Tibial artery (tissue), 4 donors: ENCODE measurements at regions of chr13 and their contacts with region 1.

Region 1: GRCh38 chr13:44160591-44161191 is 212.9 kb upstream of the SERP2 start:
- DNase-seq: peak in 1 of 2 donors; percentile 81
- H3K4me3 ChIP-seq: no peak overlapping the region
- H3K27ac ChIP-seq: peak overlapping the region; percentile 90 to 91
- H3K4me1 ChIP-seq: peaks cover 4 to 61% (median 59%) of the 10 kb centered on the region in 4 donors
- H3K27me3 ChIP-seq: no peaks in the 10 kb centered on the region
- CTCF ChIP-seq: no peak

Region 2: DNA sequence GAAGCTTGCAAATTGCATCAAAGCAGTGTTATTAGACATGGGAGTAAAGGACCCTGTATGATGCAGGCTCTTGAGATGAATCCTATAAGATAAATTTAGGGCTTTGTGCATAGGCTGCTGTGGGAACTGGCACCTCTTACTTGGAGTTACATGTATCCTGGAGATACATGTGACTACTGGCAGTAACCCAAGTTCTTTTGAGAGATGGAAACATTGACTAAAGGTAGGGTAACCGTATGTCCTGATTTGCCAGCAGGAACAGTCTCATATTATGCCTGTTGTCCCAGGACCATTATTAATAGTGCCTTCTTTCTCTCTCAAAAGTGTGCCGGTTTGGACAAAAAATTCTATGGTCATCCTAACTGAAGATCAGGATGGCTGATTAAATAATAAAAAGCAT is 85.6 kb before region 1 on chr13:
- intact Hi-C with region 1: no loop called
- DNase-seq: no peak
- H3K4me3 ChIP-seq: no peak overlapping the region
- H3K27ac ChIP-seq: no peak overlapping the region
- H3K4me1 ChIP-seq: peaks cover 0 to 4% (median 0%) of the 10 kb centered on the region in 4 donors
- H3K27me3 ChIP-seq: no peaks in the 10 kb centered on the region
- CTCF ChIP-seq: no peak

Region 3: DNA sequence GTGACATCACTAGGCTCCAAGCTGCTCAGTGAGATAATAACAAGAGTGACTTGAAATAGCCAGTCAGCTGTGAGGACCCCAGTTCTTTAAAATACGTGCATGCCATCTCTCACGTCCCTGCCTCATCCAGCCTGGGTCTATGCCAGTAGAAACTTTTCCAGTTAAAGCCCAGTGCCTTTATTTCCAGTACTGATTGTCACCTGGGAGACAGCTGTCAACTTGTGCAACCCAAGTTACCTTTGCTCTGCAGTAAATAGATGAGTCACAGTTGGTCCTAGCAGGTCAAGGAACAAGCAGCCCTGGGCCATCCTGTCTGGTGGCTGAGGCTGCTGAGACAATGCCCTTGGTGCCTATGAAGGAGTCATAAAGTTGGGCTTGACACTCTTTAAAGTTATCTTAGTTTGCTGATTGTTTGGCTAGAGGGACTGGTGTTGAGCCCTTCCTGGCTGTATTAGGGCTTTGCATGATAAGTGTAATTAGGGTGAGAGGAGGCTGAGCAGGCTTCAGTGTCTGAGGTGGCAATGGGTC is 52.3 kb before region 1 on chr13:
- intact Hi-C with region 1: no loop called
- DNase-seq: peak in 1 of 2 donors; percentile 31
- H3K4me3 ChIP-seq: no peak overlapping the region
- H3K27ac ChIP-seq: peak overlapping the region in 1 of 2 donors; percentile 3
- H3K4me1 ChIP-seq: peaks cover 0 to 61% (median 47%) of the 10 kb centered on the region in 4 donors
- H3K27me3 ChIP-seq: no peaks in the 10 kb centered on the region
- CTCF ChIP-seq: no peak

Region 4: GRCh38 chr13:44197791-44198770 is 37.4 kb after region 1 on chr13:
- intact Hi-C with region 1: no loop called
- DNase-seq: no peak
- H3K4me3 ChIP-seq: no peak overlapping the region
- H3K27ac ChIP-seq: no peak overlapping the region
- H3K4me1 ChIP-seq: peaks cover 0 to 19% (median 5%) of the 10 kb centered on the region in 4 donors
- H3K27me3 ChIP-seq: no peaks in the 10 kb centered on the region
- CTCF ChIP-seq: no peak

Region 5: GRCh38 chr13:44218501-44219240 is 58.0 kb after region 1 on chr13:
- intact Hi-C with region 1: loop called (anchors 5 kb)
- DNase-seq: peak; percentile 90 to 95
- H3K4me3 ChIP-seq: no peak overlapping the region
- H3K27ac ChIP-seq: peak overlapping the region; percentile 84 to 89
- H3K4me1 ChIP-seq: peaks cover 0 to 68% (median 39%) of the 10 kb centered on the region in 4 donors
- H3K27me3 ChIP-seq: no peaks in the 10 kb centered on the region
- CTCF ChIP-seq: no peak

Region 6: DNA sequence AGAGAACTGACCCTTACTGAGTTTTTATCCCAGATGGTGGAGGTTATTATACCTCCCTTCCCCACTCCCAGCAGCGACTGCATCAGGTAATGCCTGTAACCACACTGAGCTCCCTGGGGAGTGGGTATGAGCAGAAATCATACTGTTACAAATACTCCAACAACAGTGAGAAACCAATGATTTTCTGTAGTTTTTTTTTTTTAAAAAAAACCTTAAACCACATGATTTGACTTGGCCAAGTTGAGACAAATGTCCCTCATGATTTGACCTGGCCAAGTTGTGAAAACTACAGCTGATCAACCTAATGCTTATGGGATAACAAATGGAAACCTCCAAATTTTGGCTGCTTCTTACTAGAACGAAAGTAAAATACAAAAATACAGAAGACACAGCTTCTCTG is 179.8 kb after region 1 on chr13:
- intact Hi-C with region 1: no loop called
- DNase-seq: no peak
- H3K4me3 ChIP-seq: no peak overlapping the region
- H3K27ac ChIP-seq: no peak overlapping the region
- H3K4me1 ChIP-seq: no peaks in the 10 kb centered on the region
- H3K27me3 ChIP-seq: no peaks in the 10 kb centered on the region
- CTCF ChIP-seq: no peak